ENCODE measurements at regions of chr20 and their contacts with region 1.

Region 1: GRCh38 chr20:60057123-60057801 is 99.0 kb downstream of the CDH26 start:
- DNase-seq: peak; percentile 57
- H3K4me3 Mint-ChIP-seq: peak overlapping the region; percentile 67
- H3K27ac Mint-ChIP-seq: peak overlapping the region; percentile 87
- H3K4me1 Mint-ChIP-seq: peaks cover 44% of the 10 kb centered on the region
- H3K27me3 Mint-ChIP-seq: no peaks in the 10 kb centered on the region

Region 2: DNA sequence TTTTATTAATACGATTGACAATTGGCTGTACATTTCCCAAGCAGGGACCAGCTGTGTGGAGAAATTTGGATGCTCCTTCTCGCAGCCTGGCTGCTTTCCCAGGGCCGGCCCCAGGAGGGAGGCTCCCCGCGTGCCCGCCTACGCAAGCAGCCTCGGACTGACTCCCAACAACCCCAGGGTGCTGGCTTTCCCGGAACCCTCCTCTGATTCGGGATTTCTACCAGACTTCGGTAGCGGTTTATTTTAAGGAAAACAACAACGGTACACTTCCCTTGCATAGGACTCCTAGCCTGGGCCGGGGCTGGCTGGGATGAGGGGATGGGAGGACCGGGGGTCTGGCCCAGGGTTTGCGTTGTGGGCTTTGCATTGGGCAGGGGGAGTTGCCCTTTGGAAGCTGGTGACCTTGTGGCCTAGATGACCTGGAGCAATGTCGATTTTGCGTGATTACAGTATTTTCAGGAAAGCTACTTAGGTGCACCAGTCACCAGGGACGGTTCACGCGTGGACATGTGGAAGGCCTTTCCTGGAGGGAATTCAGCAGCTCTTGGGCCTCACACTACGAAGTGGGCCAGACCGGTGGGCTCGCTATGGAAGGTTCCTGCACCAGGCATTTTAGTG is 473.7 kb before region 1 on chr20:
- intact Hi-C with region 1: no loop called
- DNase-seq: no peak
- H3K4me3 Mint-ChIP-seq: no peak overlapping the region
- H3K27ac Mint-ChIP-seq: no peak overlapping the region
- H3K4me1 Mint-ChIP-seq: no peaks in the 10 kb centered on the region
- H3K27me3 Mint-ChIP-seq: peaks cover 11% of the 10 kb centered on the region

Region 3: DNA sequence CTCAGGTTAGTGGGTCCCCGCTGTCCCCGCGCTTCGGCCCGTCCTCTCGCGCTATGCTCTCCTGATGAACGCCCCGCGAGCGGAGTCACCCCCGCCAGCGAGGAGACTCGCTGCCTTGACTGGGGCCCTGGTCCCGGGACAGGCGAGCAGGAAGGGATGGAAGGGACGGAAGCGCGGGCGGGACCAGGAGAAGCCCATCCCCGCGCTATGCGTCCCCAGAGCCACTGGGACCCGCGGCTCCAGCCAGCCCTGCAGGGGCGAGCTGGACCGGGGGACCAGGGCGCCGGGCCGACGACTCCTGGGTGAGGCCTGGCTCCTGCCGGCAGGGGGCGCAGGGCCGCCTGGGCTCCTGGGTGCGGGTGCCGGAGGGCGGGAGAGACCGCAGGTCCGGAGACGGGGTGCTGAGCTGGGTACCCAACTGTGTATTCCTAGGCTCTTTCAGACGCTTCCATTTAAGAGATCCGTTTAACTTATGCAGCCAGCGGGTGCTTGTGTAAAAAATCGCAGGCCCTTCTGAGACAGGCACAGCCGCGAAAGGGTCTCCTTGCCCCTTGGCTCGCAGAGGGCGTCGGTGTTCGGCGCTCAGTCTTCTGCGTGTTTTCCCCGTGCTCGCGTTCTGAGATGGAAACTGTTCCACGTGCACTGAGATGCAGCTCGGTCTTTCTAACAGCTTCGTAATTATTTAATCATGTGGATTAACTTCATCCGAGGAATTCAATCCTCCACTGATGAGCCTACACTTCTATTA is 123.2 kb before region 1 on chr20:
- intact Hi-C with region 1: loop called (anchors 2 kb)
- DNase-seq: peak; percentile 74
- H3K4me3 Mint-ChIP-seq: peak overlapping the region; percentile 79
- H3K27ac Mint-ChIP-seq: no peak overlapping the region
- H3K4me1 Mint-ChIP-seq: peaks cover 48% of the 10 kb centered on the region
- H3K27me3 Mint-ChIP-seq: peaks cover 3% of the 10 kb centered on the region

Region 4: GRCh38 chr20:59940174-59940971 is 116.9 kb before region 1 on chr20 and contains the starts of genes FAM217B and PPP1R3D:
- intact Hi-C with region 1: loop called (anchors 2 kb)
- DNase-seq: peak; percentile 92
- H3K4me3 Mint-ChIP-seq: peak within 1 kb of the TSS; percentile 98
- H3K27ac Mint-ChIP-seq: peak within 1 kb of the TSS; percentile 99
- H3K4me1 Mint-ChIP-seq: peaks cover 48% of the 10 kb centered on the region
- H3K27me3 Mint-ChIP-seq: no peaks in the 10 kb centered on the region
- total RNA-seq, gene FAM217B: 33.9 and 35.6 TPM in 2 replicates
- total RNA-seq, gene PPP1R3D: 7.0 and 7.6 TPM in 2 replicates

Region 5: GRCh38 chr20:60210779-60211617 is 153.7 kb after region 1 on chr20:
- intact Hi-C with region 1: loop called (anchors 5 kb)
- DNase-seq: peak; percentile 32
- H3K4me3 Mint-ChIP-seq: no peak overlapping the region
- H3K27ac Mint-ChIP-seq: no peak overlapping the region
- H3K4me1 Mint-ChIP-seq: no peaks in the 10 kb centered on the region
- H3K27me3 Mint-ChIP-seq: peaks cover 1% of the 10 kb centered on the region

Region 6: DNA sequence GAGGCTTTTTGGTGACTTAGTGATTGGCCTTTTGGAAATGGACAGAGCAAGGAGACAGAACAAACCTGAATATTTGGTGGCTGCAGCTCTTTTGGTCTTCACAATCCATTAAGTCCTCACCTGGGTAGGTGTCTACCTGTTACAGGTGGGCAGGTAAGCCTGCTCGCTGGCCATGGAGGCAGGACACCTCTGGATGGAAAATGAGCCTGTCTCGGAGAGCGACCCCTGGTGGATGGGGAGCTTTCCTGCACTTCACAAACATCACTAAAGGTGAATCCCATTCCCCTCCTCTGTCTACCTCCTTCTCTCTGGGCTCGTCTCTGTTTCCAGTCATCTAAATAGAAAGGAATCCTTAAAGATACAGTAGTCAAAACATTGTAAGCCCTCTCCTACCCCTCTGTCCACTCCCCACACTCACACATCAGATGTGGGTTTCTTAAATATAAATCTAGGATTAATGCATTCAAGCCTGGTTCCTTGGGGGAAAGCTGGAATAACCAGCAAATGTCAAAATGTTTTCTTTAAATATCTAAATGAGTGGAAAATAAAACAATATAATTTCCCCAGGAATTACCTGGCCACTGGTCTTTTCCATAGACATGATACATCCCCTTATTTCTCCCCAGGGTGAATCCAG is 205.8 kb after region 1 on chr20:
- intact Hi-C with region 1: loop called (anchors 1 kb)
- DNase-seq: peak; percentile 12
- H3K4me3 Mint-ChIP-seq: no peak overlapping the region
- H3K27ac Mint-ChIP-seq: no peak overlapping the region
- H3K4me1 Mint-ChIP-seq: no peaks in the 10 kb centered on the region
- H3K27me3 Mint-ChIP-seq: no peaks in the 10 kb centered on the region

Region 7: DNA sequence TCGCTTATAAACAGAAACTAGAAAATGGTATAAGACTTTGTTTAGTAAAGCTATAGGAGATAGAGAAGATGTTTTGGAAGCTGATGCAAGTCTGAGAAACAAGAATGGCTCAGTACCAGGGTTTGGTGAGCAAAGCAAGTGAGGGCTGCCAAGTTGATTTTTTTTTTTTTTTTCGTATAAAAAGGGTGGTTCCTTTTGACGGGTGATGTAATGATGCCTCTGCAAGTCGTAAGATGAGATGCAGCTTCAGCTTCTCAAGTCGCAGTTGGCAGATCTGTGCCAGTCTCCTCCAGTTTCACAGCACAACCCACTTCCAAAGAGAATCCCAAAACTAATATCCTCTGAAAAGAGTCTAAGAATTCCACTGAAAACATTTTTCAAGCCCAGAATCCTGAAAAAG is 942.0 kb after region 1 on chr20:
- intact Hi-C with region 1: no loop called
- DNase-seq: no peak
- H3K4me3 Mint-ChIP-seq: no peak overlapping the region
- H3K27ac Mint-ChIP-seq: no peak overlapping the region
- H3K4me1 Mint-ChIP-seq: no peaks in the 10 kb centered on the region
- H3K27me3 Mint-ChIP-seq: no peaks in the 10 kb centered on the region

Region 8: GRCh38 chr20:61263084-61263695 is 1205.9 kb after region 1 on chr20:
- intact Hi-C with region 1: loop called (anchors 5 kb)
- DNase-seq: no peak
- H3K4me3 Mint-ChIP-seq: no peak overlapping the region
- H3K27ac Mint-ChIP-seq: no peak overlapping the region
- H3K4me1 Mint-ChIP-seq: no peaks in the 10 kb centered on the region
- H3K27me3 Mint-ChIP-seq: no peaks in the 10 kb centered on the region

Measured in activated T-helper 1 cell treated with anti-CD3 and anti-CD28 coated beads, Interleukin-12 subunit alpha, Interleukin-12 subunit beta, Interleukin-2, Interleukin-4 antibody, amounts not matched to agents 30 ng/mL and 10 ng/mL and 1 ng/mL, durations not matched to agents 14 hours and 24 hours and 36 hours (primary cell).